ENCODE measurements at regions of chr7 and their contacts with region 1.

Region 1: GRCh38 chr7:139762886-139763285 is 14.9 kb downstream of the HIPK2 start:
- DNase-seq: peak; percentile 89
- H3K4me3 ChIP-seq: no peak overlapping the region
- H3K27ac ChIP-seq: peak overlapping the region; percentile 43
- H3K4me1 ChIP-seq: peaks cover 26% of the 10 kb centered on the region
- H3K27me3 ChIP-seq: no peaks in the 10 kb centered on the region
- CTCF ChIP-seq: no peak
- POLR2A ChIP-seq: no peak

Region 2: DNA sequence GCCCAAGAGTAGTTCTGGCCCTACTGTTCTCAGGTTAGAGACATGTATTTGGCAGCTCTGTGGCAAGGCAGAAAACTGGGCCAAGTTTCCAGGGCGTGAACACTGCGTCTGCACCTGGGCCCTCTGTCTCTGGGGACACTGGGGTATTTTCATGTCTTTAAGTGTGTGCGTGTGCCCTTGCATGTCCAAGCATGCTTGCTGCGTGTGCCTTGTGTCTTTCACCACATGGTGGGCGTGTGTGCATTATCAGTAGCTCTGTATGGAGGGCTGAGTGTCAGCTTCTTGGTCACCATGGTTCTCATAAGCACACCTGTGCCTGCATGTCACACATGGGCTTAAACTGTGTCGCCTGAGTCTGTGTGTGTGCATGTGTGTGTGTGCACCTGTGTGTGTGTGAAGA is 54.3 kb before region 1 on chr7:
- CTCF ChIA-PET with region 1: no interaction called
- POLR2A ChIA-PET with region 1: no interaction called
- dilution Hi-C with region 1: no loop called
- intact Hi-C with region 1: no loop called
- DNase-seq: no peak
- H3K4me3 ChIP-seq: no peak overlapping the region
- H3K27ac ChIP-seq: no peak overlapping the region
- H3K4me1 ChIP-seq: no peaks in the 10 kb centered on the region
- H3K27me3 ChIP-seq: no peaks in the 10 kb centered on the region
- CTCF ChIP-seq: no peak
- POLR2A ChIP-seq: no peak

Region 3: DNA sequence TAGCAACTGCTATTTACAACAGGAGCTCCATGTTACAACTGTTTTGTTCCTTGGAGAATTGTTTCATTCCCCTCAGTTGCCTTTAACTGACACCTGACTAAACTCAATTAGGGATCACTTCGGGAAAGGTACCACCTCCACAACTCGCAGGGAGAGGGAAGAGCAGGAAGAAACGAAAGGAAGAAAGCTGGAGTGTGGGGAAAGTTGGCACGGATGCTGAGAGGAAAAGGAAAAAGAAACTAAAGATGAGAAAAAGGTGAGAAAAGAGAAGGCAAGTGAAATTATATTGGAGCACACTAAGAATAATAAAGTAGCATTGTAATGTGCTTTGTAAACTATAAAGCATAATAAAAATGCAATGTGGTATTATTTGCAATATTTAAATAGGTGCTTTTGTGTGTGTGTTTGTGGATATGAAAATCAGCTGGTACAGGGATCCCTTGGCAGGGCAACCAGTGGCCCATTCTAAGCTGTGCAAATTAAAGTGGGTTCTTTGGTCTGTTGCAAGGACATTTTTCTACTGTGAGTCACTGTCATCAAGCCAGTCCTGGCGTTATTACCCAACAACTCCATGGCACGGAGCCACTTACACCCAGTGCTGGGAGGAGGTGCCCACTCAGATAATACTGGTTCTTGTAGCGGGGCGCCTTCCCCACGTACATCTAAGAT is 30.9 kb before region 1 on chr7:
- CTCF ChIA-PET with region 1: interaction called, 7 read pairs
- POLR2A ChIA-PET with region 1: no interaction called
- dilution Hi-C with region 1: no loop called
- intact Hi-C with region 1: loop called (anchors 1 kb)
- DNase-seq: peak; percentile 81
- H3K4me3 ChIP-seq: peak overlapping the region in 1 of 3 experiments; percentile 50
- H3K27ac ChIP-seq: peak overlapping the region; percentile 87
- H3K4me1 ChIP-seq: peaks cover 53% of the 10 kb centered on the region
- H3K27me3 ChIP-seq: no peaks in the 10 kb centered on the region
- CTCF ChIP-seq: no peak
- POLR2A ChIP-seq: no peak

Region 4: DNA sequence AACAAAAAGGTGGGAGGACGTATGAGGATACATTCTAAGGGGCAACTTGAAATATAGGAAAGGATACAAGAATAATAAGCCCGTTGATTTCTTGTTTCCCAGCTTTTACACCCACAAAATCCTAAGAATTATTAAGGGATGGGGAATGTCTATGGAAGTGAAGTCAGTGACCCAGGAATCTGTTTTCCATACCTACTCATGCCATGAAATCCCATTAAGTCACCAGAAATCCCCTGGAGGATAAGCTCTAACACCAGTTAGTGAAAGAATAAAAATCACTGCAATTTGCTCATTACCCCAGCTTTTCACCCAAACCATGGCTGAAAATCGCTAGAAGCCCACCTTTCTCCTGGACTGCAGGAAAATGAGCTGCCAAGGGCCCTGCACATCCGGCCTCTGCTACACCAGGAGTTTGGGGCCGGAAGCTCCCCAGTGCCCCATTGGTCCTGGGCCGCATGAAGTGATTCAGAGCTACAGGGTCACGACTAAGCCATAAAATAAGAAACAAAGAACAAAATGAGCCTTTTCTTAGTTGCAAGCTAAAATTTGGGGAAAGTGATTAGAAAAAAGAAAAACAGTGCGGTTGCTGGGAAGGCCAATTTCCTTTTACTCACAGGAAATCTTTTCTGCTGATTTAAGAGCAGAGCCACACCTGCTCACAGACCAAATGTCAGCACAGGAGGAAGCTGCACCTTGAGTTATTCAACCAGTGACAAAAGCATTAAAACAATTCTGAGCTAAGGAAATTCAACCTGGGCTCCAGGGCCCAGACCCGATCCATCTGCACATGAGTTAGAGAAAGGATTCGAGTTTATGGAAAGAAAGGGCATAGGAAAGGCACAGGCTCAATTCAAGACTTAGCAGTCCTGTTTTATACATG is 25.4 kb before region 1 on chr7:
- CTCF ChIA-PET with region 1: interaction called, 7 read pairs
- POLR2A ChIA-PET with region 1: no interaction called
- dilution Hi-C with region 1: no loop called
- intact Hi-C with region 1: loop called (anchors 1 kb)
- DNase-seq: peak; percentile 48
- H3K4me3 ChIP-seq: no peak overlapping the region
- H3K27ac ChIP-seq: peak overlapping the region; percentile 57
- H3K4me1 ChIP-seq: peaks cover 47% of the 10 kb centered on the region
- H3K27me3 ChIP-seq: no peaks in the 10 kb centered on the region
- CTCF ChIP-seq: no peak
- POLR2A ChIP-seq: peak; percentile 25

Region 5: DNA sequence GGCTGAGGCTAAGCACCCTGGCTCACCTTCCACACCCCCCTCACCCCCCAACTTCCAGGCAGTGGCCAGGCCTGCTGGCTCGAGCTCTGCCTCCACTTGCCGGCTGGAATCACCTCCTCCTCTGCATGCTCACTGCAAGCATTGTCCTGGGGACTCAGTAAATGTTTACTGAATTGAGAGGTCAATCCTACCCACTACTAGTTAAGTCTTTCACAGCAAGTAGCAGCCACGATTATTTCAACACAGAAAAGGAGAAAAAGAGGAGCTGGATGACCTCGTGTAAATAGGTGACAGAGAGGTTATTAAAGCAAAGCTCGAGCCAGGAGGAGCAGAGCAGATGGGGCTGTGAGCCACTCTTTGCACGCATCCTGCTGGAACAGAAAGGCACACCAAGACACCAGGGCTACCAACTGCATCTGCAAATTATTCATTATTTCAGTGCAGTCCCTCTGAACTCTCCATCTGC is 17.2 kb before region 1 on chr7:
- CTCF ChIA-PET with region 1: no interaction called
- POLR2A ChIA-PET with region 1: no interaction called
- dilution Hi-C with region 1: no loop called
- intact Hi-C with region 1: loop called (anchors 2 kb)
- DNase-seq: no peak
- H3K4me3 ChIP-seq: no peak overlapping the region
- H3K27ac ChIP-seq: no peak overlapping the region
- H3K4me1 ChIP-seq: no peaks in the 10 kb centered on the region
- H3K27me3 ChIP-seq: no peaks in the 10 kb centered on the region
- CTCF ChIP-seq: no peak
- POLR2A ChIP-seq: no peak

Region 6: GRCh38 chr7:139930286-139930965 is 167.5 kb after region 1 on chr7:
- CTCF ChIA-PET with region 1: no interaction called
- POLR2A ChIA-PET with region 1: no interaction called
- dilution Hi-C with region 1: no loop called
- intact Hi-C with region 1: no loop called
- DNase-seq: no peak
- H3K4me3 ChIP-seq: no peak overlapping the region
- H3K27ac ChIP-seq: no peak overlapping the region
- H3K4me1 ChIP-seq: no peaks in the 10 kb centered on the region
- H3K27me3 ChIP-seq: peaks cover 0 to 2% of the 10 kb centered on the region in 2 experiments
- CTCF ChIP-seq: no peak
- POLR2A ChIP-seq: no peak